ENCODE measurements at regions of chr6 and their contacts with region 1.

Region 1: GRCh38 chr6:144931172-144932035 is 646.3 kb downstream of the UTRN start:
- DNase-seq: no peak
- H3K4me3 ChIP-seq: no peak overlapping the region
- CTCF ChIP-seq: peak; percentile 53

Region 2: GRCh38 chr6:144588674-144589325 is 342.6 kb before region 1 on chr6:
- CTCF ChIA-PET with region 1: interaction called, 30 read pairs
- POLR2A ChIA-PET with region 1: no interaction called
- DNase-seq: no peak
- H3K4me3 ChIP-seq: no peak overlapping the region
- CTCF ChIP-seq: no peak

Region 3: GRCh38 chr6:144918073-144918472 is 13.3 kb before region 1 on chr6:
- CTCF ChIA-PET with region 1: interaction called, 10 read pairs
- POLR2A ChIA-PET with region 1: no interaction called
- DNase-seq: no peak
- H3K4me3 ChIP-seq: no peak overlapping the region
- CTCF ChIP-seq: no peak

Measured in AG04449 (cell line).